Tibial artery (tissue), 4 donors: ENCODE measurements at regions of chr16 and their contacts with region 1.

Region 1: DNA sequence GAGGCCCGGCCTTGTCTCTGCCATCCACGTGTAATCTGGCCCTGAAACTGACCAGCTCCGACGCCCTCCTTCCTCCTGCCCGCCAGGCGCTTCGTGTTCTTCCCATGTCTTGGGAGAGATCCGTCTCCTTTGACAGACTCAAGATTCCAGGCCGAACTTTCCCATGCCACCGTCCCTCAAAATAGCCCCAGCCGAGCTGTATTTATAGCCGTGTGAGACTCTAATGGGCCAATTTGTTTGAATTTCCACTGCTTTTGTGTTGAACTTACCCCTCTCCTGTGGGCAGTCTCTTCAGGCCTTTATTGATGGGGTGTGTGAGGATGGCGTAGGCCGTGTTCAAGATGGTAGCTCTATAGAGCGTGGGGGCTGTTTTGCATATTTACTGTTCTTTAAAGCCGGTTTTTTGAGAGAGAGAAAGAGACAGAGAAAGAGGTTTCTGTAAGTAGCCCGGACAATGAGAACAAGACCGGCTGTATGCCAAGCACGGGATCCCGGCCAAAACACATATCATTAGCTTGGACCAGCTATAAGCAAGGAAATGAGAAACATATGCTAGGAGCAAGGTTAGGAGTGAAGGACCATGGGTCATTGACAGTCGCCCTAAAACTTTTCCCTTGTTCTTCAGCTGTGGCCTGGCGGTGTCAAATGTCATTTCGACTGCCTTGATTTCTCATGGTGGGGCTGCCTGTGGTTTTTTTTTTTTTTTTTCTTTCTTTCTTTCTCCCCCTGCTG is 124.5 kb upstream of the ZFHX3 start:
- DNase-seq: peak; percentile 66 to 87
- H3K4me3 ChIP-seq: no peak overlapping the region
- H3K27ac ChIP-seq: peak overlapping the region; percentile 85 to 91
- H3K4me1 ChIP-seq: peaks cover 0 to 43% (median 21%) of the 10 kb centered on the region in 4 donors
- H3K27me3 ChIP-seq: no peaks in the 10 kb centered on the region
- CTCF ChIP-seq: no peak

Region 2: GRCh38 chr16:72221630-72222024 is 950.8 kb before region 1 on chr16:
- intact Hi-C with region 1: no loop called
- DNase-seq: no peak
- H3K4me3 ChIP-seq: no peak overlapping the region
- H3K27ac ChIP-seq: no peak overlapping the region
- H3K4me1 ChIP-seq: no peaks in the 10 kb centered on the region
- H3K27me3 ChIP-seq: no peaks in the 10 kb centered on the region
- CTCF ChIP-seq: no peak

Region 3: GRCh38 chr16:72832621-72833248 is 339.7 kb before region 1 on chr16:
- intact Hi-C with region 1: loop called (anchors 10 kb)
- DNase-seq: peak; percentile 86 to 89
- H3K4me3 ChIP-seq: no peak overlapping the region
- H3K27ac ChIP-seq: peak overlapping the region; percentile 17 to 67
- H3K4me1 ChIP-seq: peaks cover 0 to 55% (median 24%) of the 10 kb centered on the region in 4 donors
- H3K27me3 ChIP-seq: no peaks in the 10 kb centered on the region
- CTCF ChIP-seq: peak; percentile 92 to 98

Region 4: GRCh38 chr16:73095885-73096421 is 76.5 kb before region 1 on chr16:
- intact Hi-C with region 1: loop called (anchors 10 kb)
- DNase-seq: no peak
- H3K4me3 ChIP-seq: peak overlapping the region; percentile 6 to 15
- H3K27ac ChIP-seq: peak overlapping the region; percentile 88 to 99
- H3K4me1 ChIP-seq: peaks cover 0 to 63% (median 38%) of the 10 kb centered on the region in 4 donors
- H3K27me3 ChIP-seq: no peaks in the 10 kb centered on the region
- CTCF ChIP-seq: no peak